ENCODE measurements at regions of chr6 and their contacts with region 1.

Region 1: GRCh38 chr6:81838006-81838405 is 85.5 kb upstream of the TENT5A start:
- H3K4me3 Mint-ChIP-seq: no peak overlapping the region
- H3K27ac Mint-ChIP-seq: no peak overlapping the region
- H3K4me1 Mint-ChIP-seq: peaks cover 13% of the 10 kb centered on the region
- H3K27me3 Mint-ChIP-seq: no peaks in the 10 kb centered on the region

Region 2: DNA sequence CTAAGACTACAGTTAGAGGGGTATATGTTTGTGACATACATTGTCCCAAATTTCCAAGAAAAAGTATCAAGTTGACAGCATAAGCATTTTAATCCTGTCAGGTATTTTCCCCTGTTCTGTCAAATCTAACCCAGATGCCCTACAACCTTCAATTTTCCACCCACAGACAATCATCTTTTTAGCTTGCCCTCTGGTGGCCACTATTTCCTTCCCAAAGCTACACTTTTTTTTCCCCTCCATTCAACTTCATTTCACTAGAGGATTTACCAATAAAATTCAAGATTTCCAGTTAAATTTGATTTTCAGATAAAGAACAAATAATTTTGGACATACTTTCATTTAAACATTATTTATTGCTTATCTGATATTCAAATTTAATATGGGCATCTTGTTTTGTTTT is 372.1 kb before region 1 on chr6:
- intact Hi-C with region 1: no loop called
- H3K4me3 Mint-ChIP-seq: no peak overlapping the region
- H3K27ac Mint-ChIP-seq: no peak overlapping the region
- H3K4me1 Mint-ChIP-seq: no peaks in the 10 kb centered on the region
- H3K27me3 Mint-ChIP-seq: no peaks in the 10 kb centered on the region

Region 3: GRCh38 chr6:81759782-81760181 is 78.2 kb before region 1 on chr6:
- intact Hi-C with region 1: loop called (anchors 5 kb)
- H3K4me3 Mint-ChIP-seq: no peak overlapping the region
- H3K27ac Mint-ChIP-seq: no peak overlapping the region
- H3K4me1 Mint-ChIP-seq: peaks cover 23% of the 10 kb centered on the region
- H3K27me3 Mint-ChIP-seq: peaks cover 2% of the 10 kb centered on the region